ENCODE measurements at regions of chr2 and their contacts with region 1.

Region 1: DNA sequence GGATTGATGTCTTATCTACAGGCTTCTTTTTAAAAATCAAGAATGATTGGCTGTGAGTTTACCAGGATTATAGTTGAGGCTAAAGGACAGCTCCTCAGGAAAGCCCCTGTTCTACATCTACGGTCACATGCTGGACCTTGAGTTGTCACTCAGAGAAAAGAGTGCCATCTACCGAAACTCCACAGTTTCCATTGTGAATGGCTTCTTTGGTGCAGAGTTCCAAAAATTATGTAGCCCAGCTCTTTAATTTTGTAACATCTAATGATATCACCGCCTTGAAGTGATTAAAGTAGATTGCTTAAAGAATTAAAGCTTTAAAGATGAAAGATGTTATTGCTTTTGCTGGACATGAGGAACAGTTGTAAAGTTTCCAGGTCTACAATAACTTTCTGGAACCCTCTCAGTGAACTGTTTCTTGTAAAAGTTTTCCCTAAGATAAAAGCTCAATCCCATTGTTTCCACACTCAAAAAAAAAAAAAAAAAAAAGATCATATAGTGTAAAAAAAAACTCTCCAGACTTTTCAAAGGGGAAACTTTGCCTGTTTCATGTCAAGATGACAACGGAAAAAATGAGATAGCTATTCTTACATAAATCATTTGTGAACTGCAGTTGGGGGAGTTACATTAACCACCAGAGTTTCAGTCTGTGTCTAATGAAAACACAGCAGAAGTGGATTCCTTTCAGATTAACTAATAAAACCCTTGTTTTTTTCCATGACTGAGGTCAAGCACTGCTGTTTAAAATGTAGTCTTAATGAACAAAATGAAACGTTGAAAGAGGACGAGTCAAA is 4.3 kb downstream of the COL3A1 start:
- DNase-seq: peak in 1 of 2 donors; percentile 42
- ATAC-seq: peak; percentile 32 to 68 (median 56)
- H3K4me3 ChIP-seq: peak overlapping the region in 9 of 10 donors; percentile 15 to 60 (median 53)
- H3K27ac ChIP-seq: peak overlapping the region in 9 of 10 donors; percentile 20 to 87 (median 80)
- H3K4me1 ChIP-seq: peaks cover 0 to 3% (median 0%) of the 10 kb centered on the region in 9 donors
- H3K27me3 ChIP-seq: no peaks in the 10 kb centered on the region
- CTCF ChIP-seq: peak in 7 of 9 donors; percentile 10 to 61 (median 45)

Region 2: GRCh38 chr2:188529746-188530145 is 448.7 kb before region 1 on chr2:
- intact Hi-C with region 1: loop called in 9 of 10 experiments (anchors 5 to 10 kb)
- DNase-seq: no peak
- ATAC-seq: no peak
- H3K4me3 ChIP-seq: no peak overlapping the region
- H3K27ac ChIP-seq: no peak overlapping the region
- H3K4me1 ChIP-seq: peaks cover 0 to 14% (median 0%) of the 10 kb centered on the region in 9 donors
- H3K27me3 ChIP-seq: no peaks in the 10 kb centered on the region
- CTCF ChIP-seq: no peak

Region 3: GRCh38 chr2:188765522-188766470 is 212.7 kb before region 1 on chr2:
- intact Hi-C with region 1: loop called in 1 of 10 experiments (anchors 5 kb)
- DNase-seq: no peak
- ATAC-seq: no peak
- H3K4me3 ChIP-seq: no peak overlapping the region
- H3K27ac ChIP-seq: no peak overlapping the region
- H3K4me1 ChIP-seq: no peaks in the 10 kb centered on the region
- H3K27me3 ChIP-seq: no peaks in the 10 kb centered on the region
- CTCF ChIP-seq: peak in 6 of 9 donors; percentile 24 to 49 (median 34)

Region 4: GRCh38 chr2:188897096-188897495 is 81.4 kb before region 1 on chr2:
- intact Hi-C with region 1: loop called in 2 of 10 experiments (anchors 5 to 10 kb)
- DNase-seq: peak in 1 of 2 donors; percentile 9
- ATAC-seq: peak in 5 of 8 donors; percentile 50 to 83 (median 71)
- H3K4me3 ChIP-seq: no peak overlapping the region
- H3K27ac ChIP-seq: peak overlapping the region in 6 of 10 donors; percentile 2 to 59 (median 32)
- H3K4me1 ChIP-seq: peaks cover 0 to 5% (median 0%) of the 10 kb centered on the region in 9 donors
- H3K27me3 ChIP-seq: no peaks in the 10 kb centered on the region
- CTCF ChIP-seq: no peak

Measured in heart right ventricle (tissue), 16 donors.